CD14-positive monocyte (primary cell): ENCODE measurements at regions of chr13 and their contacts with region 1.

Region 1: DNA sequence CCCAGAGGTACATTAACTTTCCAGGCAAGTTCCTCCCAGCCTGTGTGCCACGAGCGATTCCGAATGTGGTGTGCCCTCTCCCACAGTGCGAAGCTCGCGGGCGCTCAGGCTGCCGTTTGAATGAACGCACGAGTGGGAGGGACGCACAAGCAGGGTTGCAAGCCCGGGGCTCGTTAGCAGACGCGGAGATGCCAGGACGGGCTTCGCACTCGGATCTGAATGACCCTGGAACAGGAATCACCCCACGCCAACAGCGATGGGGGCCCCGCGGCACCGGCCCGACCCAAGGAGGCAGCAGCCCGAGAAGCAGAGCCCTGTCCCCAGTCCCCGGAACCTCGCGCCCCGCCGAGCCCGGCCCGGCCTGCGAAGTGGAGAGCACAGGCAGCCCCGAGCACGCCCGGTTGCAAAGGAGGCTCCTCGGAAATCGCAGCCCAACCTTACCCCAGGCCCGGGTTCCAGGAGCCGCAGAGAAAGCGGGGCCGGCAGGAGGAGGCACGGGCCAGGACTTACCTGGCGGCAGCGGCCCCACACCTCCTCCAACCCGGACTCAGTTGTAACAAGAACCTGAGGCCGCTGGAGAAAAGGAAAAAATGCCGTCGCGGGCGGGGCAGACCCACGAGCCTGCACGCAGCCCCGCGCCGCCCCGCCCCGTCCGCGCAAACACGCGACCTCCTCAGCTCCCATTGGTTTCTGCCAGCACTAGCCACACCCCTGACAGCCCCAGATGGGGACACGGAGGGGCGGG is at the start of gene SLC25A30:
- DNase-seq: peak; percentile 83 to 89 (median 87)
- H3K4me3 ChIP-seq: peak within 1 kb of the TSS; percentile 76 to 87 (median 80)
- H3K4me3 Mint-ChIP-seq: peak within 1 kb of the TSS; percentile 88 to 96
- H3K27ac ChIP-seq: peak within 1 kb of the TSS; percentile 81 to 95
- H3K27ac Mint-ChIP-seq: peak within 1 kb of the TSS; percentile 93 to 98 (median 97)
- H3K4me1 ChIP-seq: peaks cover 19 to 44% of the 10 kb centered on the region in 2 donors
- H3K4me1 Mint-ChIP-seq: peaks cover 23% of the 10 kb centered on the region
- H3K27me3 ChIP-seq: no peaks in the 10 kb centered on the region
- H3K27me3 Mint-ChIP-seq: peaks cover 0 to 3% (median 2%) of the 10 kb centered on the region in 3 donors
- CTCF ChIP-seq: no peak
- polyA plus RNA-seq, gene SLC25A30: 0.92 to 14.0 (median 2.3) TPM

Region 2: DNA sequence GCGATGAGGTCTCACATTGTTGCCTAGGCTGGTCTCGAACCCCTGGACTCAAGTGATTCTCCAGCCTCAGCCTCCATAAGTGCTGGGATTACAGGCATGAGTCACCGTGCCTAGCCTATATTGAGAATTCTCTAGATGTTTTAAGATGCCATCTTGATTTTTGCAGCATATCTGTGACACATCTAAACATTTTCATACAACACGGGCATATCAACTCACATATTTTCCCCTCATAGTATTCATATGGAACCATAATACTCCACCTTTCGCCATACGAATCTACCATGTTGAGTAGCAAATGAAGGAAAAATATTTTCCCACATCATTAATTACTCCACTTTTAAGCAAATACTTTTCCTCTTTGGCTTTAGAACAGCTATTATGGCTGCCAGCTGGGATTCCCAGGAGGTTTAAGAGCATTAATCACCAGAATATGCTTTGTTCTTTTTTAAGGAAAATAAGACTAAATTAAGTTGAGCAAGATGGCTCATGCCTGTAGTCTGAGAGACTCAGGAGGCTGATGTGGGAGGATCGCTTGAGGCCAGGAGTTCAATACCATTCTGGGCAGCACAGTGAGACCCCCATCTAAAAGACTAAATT is 354.6 kb before region 1 on chr13:
- intact Hi-C with region 1: no loop called
- DNase-seq: no peak
- H3K4me3 ChIP-seq: no peak overlapping the region
- H3K4me3 Mint-ChIP-seq: no peak overlapping the region
- H3K27ac ChIP-seq: no peak overlapping the region
- H3K27ac Mint-ChIP-seq: no peak overlapping the region
- H3K4me1 ChIP-seq: peaks cover 0 to 2% of the 10 kb centered on the region in 2 donors
- H3K4me1 Mint-ChIP-seq: peaks cover 11% of the 10 kb centered on the region
- H3K27me3 ChIP-seq: no peaks in the 10 kb centered on the region
- H3K27me3 Mint-ChIP-seq: peaks cover 0 to 8% (median 3%) of the 10 kb centered on the region in 3 donors
- CTCF ChIP-seq: no peak

Region 3: DNA sequence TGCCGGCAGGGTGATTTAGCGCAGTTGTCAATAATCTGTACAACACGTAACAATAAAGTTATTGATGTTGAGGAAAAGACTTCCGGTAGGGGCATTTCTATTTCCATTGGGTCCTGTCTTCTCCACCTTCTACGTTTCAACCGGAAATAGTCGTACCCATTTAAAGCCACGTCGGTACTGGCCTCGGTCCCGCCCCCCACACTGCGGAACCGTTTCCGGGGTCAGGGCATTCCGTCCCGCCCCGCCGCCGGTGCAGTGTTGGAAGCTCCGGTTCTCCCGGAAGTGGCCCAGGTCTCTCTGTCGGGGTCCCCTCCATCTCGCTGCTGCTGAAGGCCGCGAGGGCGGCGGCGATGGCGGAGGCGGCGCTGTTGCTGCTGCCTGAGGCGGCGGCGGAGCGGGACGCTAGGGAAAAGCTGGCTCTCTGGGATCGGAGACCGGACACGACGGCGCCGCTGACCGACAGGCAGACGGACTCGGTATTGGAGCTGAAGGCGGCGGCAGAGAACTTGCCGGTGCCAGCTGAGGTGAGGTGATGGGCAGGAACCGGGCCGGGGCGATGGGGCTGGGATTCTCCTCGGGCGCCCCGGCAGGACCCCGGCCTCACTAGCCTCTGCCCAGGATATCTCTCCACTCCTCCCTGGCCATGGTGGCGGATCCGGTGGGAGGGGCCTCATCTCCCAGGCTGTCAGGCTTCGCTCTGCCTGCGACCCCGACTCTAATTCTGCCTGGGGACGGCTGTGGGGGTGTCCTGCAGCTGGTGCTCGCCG is 46.9 kb after region 1 on chr13 and contains the start of gene COG3:
- intact Hi-C with region 1: loop called (anchors 5 kb)
- DNase-seq: peak; percentile 92 to 94 (median 93)
- H3K4me3 ChIP-seq: peak within 1 kb of the TSS; percentile 64 to 100 (median 96)
- H3K4me3 Mint-ChIP-seq: peak within 1 kb of the TSS; percentile 94 to 95
- H3K27ac ChIP-seq: peak within 1 kb of the TSS; percentile 89 to 95
- H3K27ac Mint-ChIP-seq: peak within 1 kb of the TSS; percentile 88 to 97 (median 93)
- H3K4me1 ChIP-seq: peaks cover 27 to 31% of the 10 kb centered on the region in 2 donors
- H3K4me1 Mint-ChIP-seq: peaks cover 39% of the 10 kb centered on the region
- H3K27me3 ChIP-seq: no peaks in the 10 kb centered on the region
- H3K27me3 Mint-ChIP-seq: peaks cover 0 to 2% (median 0%) of the 10 kb centered on the region in 3 donors
- CTCF ChIP-seq: peak; percentile 47
- polyA plus RNA-seq, gene COG3: 12.3 to 25.3 (median 12.9) TPM